ENCODE measurements at regions of chr1 and their contacts with region 1.

Region 1: DNA sequence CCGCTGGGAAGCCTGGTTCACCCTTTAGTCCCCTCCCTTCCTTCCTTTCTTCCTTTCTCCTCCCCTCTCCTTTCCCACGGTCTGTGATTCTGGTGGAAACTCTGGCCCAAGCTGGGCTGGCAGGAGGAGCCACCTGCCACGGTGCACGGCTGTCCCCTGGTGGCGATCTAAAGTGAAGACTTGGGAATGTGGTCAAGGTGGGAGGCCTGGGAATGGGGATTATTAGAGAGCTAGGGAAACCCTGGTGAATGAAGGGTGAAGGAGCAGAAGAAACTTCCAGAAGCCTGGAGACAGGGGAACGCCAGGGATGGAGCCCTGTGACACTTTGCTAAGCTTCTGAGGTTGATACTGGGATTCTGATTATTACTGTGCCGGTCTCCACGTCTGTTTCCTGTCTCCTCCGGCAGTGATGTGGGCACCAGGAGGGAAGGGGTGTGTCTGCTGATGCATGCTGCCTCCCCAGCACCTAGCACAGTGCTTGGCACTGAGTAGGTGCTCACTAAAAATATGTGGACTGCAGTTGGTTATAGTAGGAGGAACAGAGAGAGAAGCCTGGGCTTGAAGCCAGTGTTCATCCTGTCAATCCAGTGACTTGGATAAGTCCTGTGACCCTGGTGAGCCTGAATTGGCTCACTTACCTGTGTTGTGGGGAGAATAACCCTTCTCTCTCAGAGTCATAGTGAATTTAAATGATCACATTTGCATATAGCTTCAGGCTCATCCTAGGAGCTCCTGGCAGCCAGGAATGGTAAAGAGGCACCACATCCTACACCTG is 71.2 kb upstream of the NBPF3 start:
- DNase-seq: peak; percentile 77
- ATAC-seq: peak; percentile 54
- H3K4me3 ChIP-seq: no peak overlapping the region
- H3K4me3 Mint-ChIP-seq: no peak overlapping the region
- H3K27ac ChIP-seq: no peak overlapping the region
- H3K27ac Mint-ChIP-seq: peak overlapping the region; percentile 50
- H3K4me1 ChIP-seq: peaks cover 10 to 20% of the 10 kb centered on the region in 2 donors
- H3K4me1 Mint-ChIP-seq: peaks cover 23% of the 10 kb centered on the region
- H3K27me3 ChIP-seq: no peaks in the 10 kb centered on the region
- H3K27me3 Mint-ChIP-seq: no peaks in the 10 kb centered on the region
- CTCF ChIP-seq: peak; percentile 98

Region 2: GRCh38 chr1:21232044-21232443 is 136.7 kb before region 1 on chr1:
- CTCF ChIA-PET with region 1: interaction called, 265 read pairs
- POLR2A ChIA-PET with region 1: interaction called, 3 read pairs
- intact Hi-C with region 1: no loop called
- DNase-seq: peak; percentile 66
- ATAC-seq: peak; percentile 66
- H3K4me3 ChIP-seq: no peak overlapping the region
- H3K4me3 Mint-ChIP-seq: no peak overlapping the region
- H3K27ac ChIP-seq: no peak overlapping the region
- H3K27ac Mint-ChIP-seq: no peak overlapping the region
- H3K4me1 ChIP-seq: no peaks in the 10 kb centered on the region
- H3K4me1 Mint-ChIP-seq: no peaks in the 10 kb centered on the region
- H3K27me3 ChIP-seq: no peaks in the 10 kb centered on the region
- H3K27me3 Mint-ChIP-seq: no peaks in the 10 kb centered on the region
- CTCF ChIP-seq: peak; percentile 97

Region 3: GRCh38 chr1:21270086-21270689 is 98.5 kb before region 1 on chr1:
- CTCF ChIA-PET with region 1: interaction called, 168 read pairs
- POLR2A ChIA-PET with region 1: no interaction called
- intact Hi-C with region 1: loop called (anchors 1 kb)
- DNase-seq: peak; percentile 85
- ATAC-seq: peak; percentile 92
- H3K4me3 ChIP-seq: no peak overlapping the region
- H3K4me3 Mint-ChIP-seq: no peak overlapping the region
- H3K27ac ChIP-seq: no peak overlapping the region
- H3K27ac Mint-ChIP-seq: peak overlapping the region; percentile 51
- H3K4me1 ChIP-seq: peaks cover 0 to 7% of the 10 kb centered on the region in 2 donors
- H3K4me1 Mint-ChIP-seq: peaks cover 10% of the 10 kb centered on the region
- H3K27me3 ChIP-seq: no peaks in the 10 kb centered on the region
- H3K27me3 Mint-ChIP-seq: no peaks in the 10 kb centered on the region
- CTCF ChIP-seq: peak; percentile 97

Region 4: GRCh38 chr1:21302747-21303715 is 65.7 kb before region 1 on chr1:
- CTCF ChIA-PET with region 1: interaction called, 30 read pairs
- POLR2A ChIA-PET with region 1: interaction called, 5 read pairs
- intact Hi-C with region 1: no loop called
- DNase-seq: no peak
- ATAC-seq: no peak
- H3K4me3 ChIP-seq: no peak overlapping the region
- H3K4me3 Mint-ChIP-seq: no peak overlapping the region
- H3K27ac ChIP-seq: no peak overlapping the region
- H3K27ac Mint-ChIP-seq: peak overlapping the region; percentile 37
- H3K4me1 ChIP-seq: peaks cover 29 to 49% of the 10 kb centered on the region in 2 donors
- H3K4me1 Mint-ChIP-seq: peaks cover 69% of the 10 kb centered on the region
- H3K27me3 ChIP-seq: no peaks in the 10 kb centered on the region
- H3K27me3 Mint-ChIP-seq: no peaks in the 10 kb centered on the region
- CTCF ChIP-seq: no peak

Region 5: DNA sequence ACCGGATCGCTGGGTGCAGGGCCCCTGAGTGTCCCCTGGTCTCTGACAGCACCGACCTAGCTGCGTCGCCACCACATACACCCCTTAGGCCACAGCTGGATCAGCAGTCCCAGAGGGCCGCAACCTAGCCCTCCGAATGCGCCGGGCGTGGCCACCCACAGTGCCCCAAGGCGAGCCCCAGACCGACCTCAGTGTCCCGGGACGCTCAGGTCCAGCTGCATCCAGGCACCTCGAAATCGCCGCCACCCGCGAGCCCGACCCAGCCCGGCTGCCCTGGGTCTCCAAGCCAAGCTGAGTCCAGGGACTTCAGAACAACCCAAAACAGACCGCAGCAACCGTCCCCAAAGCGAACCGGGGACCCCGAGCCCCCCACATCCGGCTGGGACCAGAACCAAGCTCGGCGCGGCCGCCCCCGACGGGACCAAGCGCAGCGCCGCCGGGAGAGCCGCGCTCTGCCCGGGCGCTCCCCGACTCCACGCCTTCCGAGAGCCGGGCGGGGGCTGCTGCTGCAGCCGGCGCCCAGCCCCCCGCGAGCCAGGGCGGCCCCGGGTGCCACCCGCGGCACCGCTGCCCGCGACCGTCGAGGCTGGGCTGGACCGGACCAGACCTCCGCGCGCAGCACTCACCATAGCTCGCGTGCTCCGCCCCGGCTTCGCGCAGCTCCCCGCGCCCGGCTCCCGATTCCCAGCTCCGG is 23.8 kb before region 1 on chr1:
- CTCF ChIA-PET with region 1: interaction called, 20 read pairs
- POLR2A ChIA-PET with region 1: interaction called, 5 read pairs
- intact Hi-C with region 1: loop called (anchors 2 kb)
- DNase-seq: no peak
- ATAC-seq: peak; percentile 39
- H3K4me3 ChIP-seq: peak overlapping the region; percentile 60 to 84 (median 69)
- H3K4me3 Mint-ChIP-seq: peak overlapping the region; percentile 91
- H3K27ac ChIP-seq: peak overlapping the region; percentile 35 to 43
- H3K27ac Mint-ChIP-seq: peak overlapping the region; percentile 85
- H3K4me1 ChIP-seq: peaks cover 38 to 45% of the 10 kb centered on the region in 2 donors
- H3K4me1 Mint-ChIP-seq: peaks cover 39% of the 10 kb centered on the region
- H3K27me3 ChIP-seq: peaks cover 0 to 4% (median 0%) of the 10 kb centered on the region in 4 experiments
- H3K27me3 Mint-ChIP-seq: no peaks in the 10 kb centered on the region
- CTCF ChIP-seq: no peak

Region 6: DNA sequence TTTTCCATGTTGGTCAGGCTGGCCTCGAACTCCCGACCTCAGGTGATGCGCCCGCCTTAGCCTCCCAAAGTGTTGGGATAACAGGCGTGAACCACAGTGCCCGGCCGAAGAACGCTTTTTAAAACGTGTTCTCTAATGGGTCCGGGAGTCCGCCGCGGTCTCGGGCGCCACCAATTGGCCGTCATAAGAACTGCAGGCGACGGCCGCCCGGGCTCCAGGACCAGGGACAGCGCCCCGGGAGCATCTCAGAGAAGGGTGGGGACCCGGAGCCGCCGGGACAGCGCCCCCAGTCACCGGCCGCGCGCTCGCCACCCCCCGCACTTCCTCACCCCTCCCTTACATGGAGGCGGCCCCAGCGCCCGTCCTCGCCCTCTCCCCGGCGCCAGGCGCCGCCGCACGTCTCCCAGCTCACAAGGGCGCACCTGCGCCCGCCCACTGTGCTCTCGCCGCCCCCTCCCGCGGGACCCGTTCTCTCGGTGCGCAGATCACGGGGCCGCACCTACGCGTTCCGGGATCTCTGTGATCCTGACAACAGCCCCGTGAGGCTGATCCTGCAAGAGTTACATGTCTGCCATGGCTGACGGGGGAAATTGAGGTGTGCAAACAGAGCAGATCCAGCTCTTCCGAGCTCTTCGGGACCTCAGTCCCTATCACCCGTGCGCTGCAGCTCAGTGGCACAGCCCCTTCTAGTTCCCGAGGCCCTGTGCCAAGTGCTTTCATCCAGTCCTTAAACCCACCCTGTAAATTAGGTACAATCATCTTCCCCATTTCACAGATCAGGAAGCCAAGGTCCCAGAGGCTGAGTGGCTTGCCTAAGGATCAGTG is 290.6 kb after region 1 on chr1:
- CTCF ChIA-PET with region 1: interaction called, 3 read pairs
- POLR2A ChIA-PET with region 1: no interaction called
- intact Hi-C with region 1: loop called (anchors 10 kb)
- DNase-seq: peak; percentile 85
- ATAC-seq: peak; percentile 92
- H3K4me3 ChIP-seq: no peak overlapping the region
- H3K4me3 Mint-ChIP-seq: peak overlapping the region; percentile 39
- H3K27ac ChIP-seq: no peak overlapping the region
- H3K27ac Mint-ChIP-seq: no peak overlapping the region
- H3K4me1 ChIP-seq: peaks cover 11% of the 10 kb centered on the region in 2 donors
- H3K4me1 Mint-ChIP-seq: peaks cover 10% of the 10 kb centered on the region
- H3K27me3 ChIP-seq: peaks cover 0 to 46% (median 14%) of the 10 kb centered on the region in 4 experiments
- H3K27me3 Mint-ChIP-seq: peaks cover 37% of the 10 kb centered on the region
- CTCF ChIP-seq: peak; percentile 91

Region 7: DNA sequence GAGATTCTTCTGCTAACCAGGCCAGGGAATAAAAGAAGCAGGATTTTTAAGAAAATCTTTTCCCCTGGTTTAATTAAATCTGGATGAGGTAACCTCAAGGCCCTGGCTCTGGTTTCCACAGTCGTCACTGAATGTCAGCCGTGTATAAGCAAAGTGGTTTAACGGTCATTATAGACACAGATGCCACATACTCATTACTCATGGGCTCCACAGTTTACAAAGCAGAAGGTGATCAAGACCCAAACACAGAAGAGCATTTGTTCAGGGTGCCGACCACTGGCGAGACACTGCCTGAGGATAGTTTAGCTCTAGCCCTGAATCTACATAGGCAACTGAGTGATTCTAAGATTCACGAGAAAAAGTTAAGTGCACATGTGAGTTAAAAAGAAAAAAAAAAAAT is 328.2 kb after region 1 on chr1:
- CTCF ChIA-PET with region 1: no interaction called
- POLR2A ChIA-PET with region 1: no interaction called
- intact Hi-C with region 1: no loop called
- DNase-seq: no peak
- ATAC-seq: no peak
- H3K4me3 ChIP-seq: no peak overlapping the region
- H3K4me3 Mint-ChIP-seq: no peak overlapping the region
- H3K27ac ChIP-seq: no peak overlapping the region
- H3K27ac Mint-ChIP-seq: no peak overlapping the region
- H3K4me1 ChIP-seq: no peaks in the 10 kb centered on the region
- H3K4me1 Mint-ChIP-seq: no peaks in the 10 kb centered on the region
- H3K27me3 ChIP-seq: no peaks in the 10 kb centered on the region
- H3K27me3 Mint-ChIP-seq: no peaks in the 10 kb centered on the region
- CTCF ChIP-seq: no peak

Measured in B cell (primary cell).